Activated CD8-positive, alpha-beta memory T cell treated with anti-CD3 and anti-CD28 coated beads, Interleukin-2, amount 10 ng/mL, durations not matched to agents 7 days and 5 days (primary cell): ENCODE measurements at regions of chr13 and their contacts with region 1.

Region 1: GRCh38 chr13:41456768-41457588 is at the start of gene RGCC:
- DNase-seq: peak; percentile 85
- ATAC-seq: peak; percentile 79
- H3K4me3 Mint-ChIP-seq: peak within 1 kb of the TSS; percentile 79
- H3K27ac Mint-ChIP-seq: peak within 1 kb of the TSS; percentile 82
- H3K4me1 Mint-ChIP-seq: peaks cover 43% of the 10 kb centered on the region
- H3K27me3 Mint-ChIP-seq: peaks cover 23% of the 10 kb centered on the region
- total RNA-seq, gene RGCC: 25.5 to 34.7 TPM

Region 2: DNA sequence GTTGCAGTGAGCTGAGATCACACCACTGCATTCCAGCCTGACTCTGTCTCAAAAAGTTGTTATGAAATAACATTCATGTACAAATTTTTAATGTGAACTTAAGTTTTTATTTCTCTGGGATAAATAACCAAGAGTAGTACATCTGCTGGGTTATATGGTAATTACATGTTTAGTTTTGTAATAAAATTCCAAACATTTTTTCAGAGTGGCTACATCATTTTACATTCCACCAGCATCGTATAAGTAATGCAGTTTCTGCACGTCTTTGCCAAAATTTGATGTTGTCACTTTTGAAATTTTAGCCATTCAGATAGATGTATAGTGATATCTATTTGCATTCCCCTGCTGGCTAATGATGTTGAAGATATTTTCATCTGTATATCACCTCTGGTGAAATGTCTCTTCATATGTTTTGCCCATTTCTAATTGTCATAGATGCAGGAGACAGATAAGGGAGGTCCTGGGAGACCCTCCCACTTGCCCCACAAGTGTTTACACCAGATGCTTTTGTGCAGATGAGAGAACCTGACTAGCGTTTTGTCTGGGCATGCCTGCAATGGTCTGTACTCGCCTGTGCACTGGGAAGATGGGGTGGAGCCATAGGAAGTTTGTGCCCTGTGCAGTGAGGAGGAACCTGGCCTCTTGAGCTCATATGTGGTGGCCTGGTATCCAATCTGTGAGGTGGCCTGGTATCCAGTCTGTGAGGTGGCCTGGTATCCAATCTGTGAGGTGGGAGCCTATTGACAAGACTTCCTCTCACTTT is 311.7 kb before region 1 on chr13:
- CTCF ChIA-PET with region 1: no interaction called
- DNase-seq: no peak
- ATAC-seq: no peak
- H3K4me3 Mint-ChIP-seq: no peak overlapping the region
- H3K27ac Mint-ChIP-seq: no peak overlapping the region
- H3K4me1 Mint-ChIP-seq: no peaks in the 10 kb centered on the region
- H3K27me3 Mint-ChIP-seq: no peaks in the 10 kb centered on the region

Region 3: DNA sequence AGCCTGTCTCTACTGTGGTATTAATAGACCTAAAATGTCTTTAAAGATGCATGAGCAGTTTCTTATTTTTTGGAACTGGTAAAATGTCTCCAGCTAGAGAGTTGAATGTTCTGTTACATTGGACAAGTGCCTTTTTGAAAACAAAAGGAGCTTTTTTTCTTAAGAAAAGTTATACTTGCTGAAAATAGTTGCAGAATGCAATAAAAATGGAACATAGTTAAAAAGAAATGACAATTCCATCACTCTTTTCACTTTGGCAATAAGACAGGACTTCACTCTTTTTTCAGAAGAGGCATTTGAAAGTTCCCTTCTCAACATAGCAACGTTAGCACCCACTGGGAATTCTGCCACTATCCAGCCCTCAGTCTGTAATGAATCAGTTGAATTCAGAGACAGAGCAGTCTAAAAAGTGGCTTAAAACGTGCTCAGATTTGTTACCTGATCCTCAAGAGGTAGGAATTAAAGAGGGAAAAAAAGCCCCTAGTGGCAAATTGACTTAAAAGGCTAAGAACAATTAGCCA is 10.5 kb after region 1 on chr13:
- CTCF ChIA-PET with region 1: interaction called, 13 read pairs
- DNase-seq: no peak
- ATAC-seq: no peak
- H3K4me3 Mint-ChIP-seq: no peak overlapping the region
- H3K27ac Mint-ChIP-seq: no peak overlapping the region
- H3K4me1 Mint-ChIP-seq: peaks cover 50% of the 10 kb centered on the region
- H3K27me3 Mint-ChIP-seq: no peaks in the 10 kb centered on the region

Region 4: GRCh38 chr13:41492404-41493260 is 35.7 kb after region 1 on chr13:
- CTCF ChIA-PET with region 1: interaction called, 14 read pairs
- DNase-seq: no peak
- ATAC-seq: peak; percentile 71
- H3K4me3 Mint-ChIP-seq: peak overlapping the region; percentile 6
- H3K27ac Mint-ChIP-seq: peak overlapping the region; percentile 93
- H3K4me1 Mint-ChIP-seq: peaks cover 48% of the 10 kb centered on the region
- H3K27me3 Mint-ChIP-seq: no peaks in the 10 kb centered on the region

Region 5: DNA sequence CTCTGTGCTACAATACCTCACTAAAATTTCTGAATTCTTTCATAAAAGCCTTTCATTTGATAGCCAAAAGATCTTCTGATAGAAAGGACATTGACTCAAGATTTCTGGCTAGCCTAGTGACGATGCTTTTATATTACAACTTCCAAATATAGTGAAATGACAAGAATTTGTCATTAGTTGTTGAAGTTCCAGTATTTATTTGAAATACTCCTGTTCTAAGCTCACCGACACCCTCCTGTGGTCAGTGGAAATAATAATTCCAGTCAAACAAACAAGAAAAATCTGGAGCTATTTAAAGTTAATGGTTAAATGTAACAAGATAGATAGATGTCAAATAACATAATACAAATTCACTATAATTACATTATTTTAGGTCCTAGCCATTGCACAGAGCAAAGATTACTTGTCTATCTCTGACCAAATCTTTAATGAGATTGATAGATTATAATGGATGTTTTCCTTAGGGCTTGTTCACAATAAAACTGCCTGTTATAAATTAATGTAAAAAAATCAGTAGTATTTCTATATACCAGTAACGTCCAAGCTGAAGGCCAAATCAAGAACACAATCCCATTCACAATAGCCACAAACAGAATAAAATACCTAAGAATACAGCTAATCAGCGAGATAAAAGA is 195.9 kb after region 1 on chr13:
- CTCF ChIA-PET with region 1: interaction called, 42 read pairs
- DNase-seq: no peak
- ATAC-seq: no peak
- H3K4me3 Mint-ChIP-seq: no peak overlapping the region
- H3K27ac Mint-ChIP-seq: no peak overlapping the region
- H3K4me1 Mint-ChIP-seq: peaks cover 2% of the 10 kb centered on the region
- H3K27me3 Mint-ChIP-seq: no peaks in the 10 kb centered on the region

Region 6: DNA sequence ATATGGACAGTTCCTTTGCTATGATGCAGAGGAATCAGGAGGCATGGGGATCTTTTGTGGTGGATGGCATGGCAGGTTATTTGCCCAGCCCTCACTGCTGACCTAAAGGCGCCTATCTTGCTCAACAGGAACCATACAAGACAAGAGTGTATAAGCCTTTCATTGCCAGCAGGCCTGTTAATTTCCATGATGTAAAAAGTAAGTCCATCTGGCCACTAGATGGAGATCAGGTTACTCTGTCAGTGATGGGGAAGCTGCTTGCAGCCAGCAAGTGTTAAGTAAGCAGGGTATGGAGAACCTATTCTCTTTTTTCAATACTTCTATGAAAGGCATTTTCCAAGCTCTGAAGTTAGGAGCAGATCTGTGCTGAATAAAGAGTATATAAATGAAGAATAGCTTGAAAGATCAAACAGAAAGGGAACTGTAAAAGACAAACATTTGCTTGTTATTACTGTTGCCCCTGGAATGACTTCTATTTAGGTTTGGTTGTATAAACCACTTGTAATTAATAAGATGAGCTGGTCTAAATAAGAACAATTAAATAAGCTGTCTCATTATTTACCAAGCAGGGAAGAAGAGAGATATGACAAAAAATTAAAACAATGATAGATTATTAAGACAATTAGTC is 211.3 kb after region 1 on chr13:
- CTCF ChIA-PET with region 1: interaction called, 11 read pairs
- DNase-seq: peak; percentile 60
- ATAC-seq: peak; percentile 91
- H3K4me3 Mint-ChIP-seq: no peak overlapping the region
- H3K27ac Mint-ChIP-seq: no peak overlapping the region
- H3K4me1 Mint-ChIP-seq: no peaks in the 10 kb centered on the region
- H3K27me3 Mint-ChIP-seq: no peaks in the 10 kb centered on the region